Activated naive CD4-positive, alpha-beta T cell treated with anti-CD3 and anti-CD28 coated beads for 36 hours (primary cell): ENCODE measurements at regions of chr2 and their contacts with region 1.

Region 1: DNA sequence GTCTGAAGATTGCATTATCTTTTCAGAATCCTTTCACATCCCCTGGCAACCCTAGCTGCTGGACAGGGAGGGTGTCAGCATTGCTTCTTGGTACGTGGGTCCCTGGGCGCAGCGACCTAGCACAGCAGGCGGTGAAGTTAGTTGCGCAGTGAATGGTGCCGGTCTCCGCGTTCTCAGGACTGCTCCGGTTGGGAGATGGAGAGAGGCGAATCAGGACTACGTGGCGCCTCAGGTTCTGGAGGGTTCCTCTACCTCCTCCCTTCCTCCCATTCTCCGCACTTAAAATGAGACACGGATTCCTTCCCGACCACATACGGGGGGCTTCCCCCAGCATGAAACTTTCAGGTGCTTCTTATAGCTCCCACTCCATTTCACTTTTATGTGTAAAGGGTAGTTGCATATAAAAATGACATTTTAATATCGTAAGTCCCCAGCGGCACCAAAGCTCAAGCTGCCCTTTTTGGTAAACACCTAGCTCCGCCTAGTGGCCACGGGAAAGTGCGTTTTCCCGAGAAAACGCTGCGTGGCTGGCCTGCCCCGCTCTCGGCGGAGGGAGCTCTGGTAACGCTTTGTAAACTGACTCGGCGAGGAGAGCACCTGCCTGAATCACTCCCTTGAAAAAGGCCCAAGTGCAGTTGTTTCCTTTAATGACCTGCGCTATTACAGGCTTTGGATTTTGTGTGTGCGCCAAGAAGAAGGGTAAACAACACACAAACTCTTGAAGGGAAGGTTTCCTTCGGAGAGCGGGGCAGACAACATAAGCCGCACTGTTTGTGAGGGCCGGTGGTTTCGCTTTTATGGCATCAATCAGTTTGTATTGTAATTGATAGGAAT is 32.9 kb upstream of the INHBB start:
- DNase-seq: peak; percentile 92
- H3K4me3 Mint-ChIP-seq: peak overlapping the region; percentile 65
- H3K27ac Mint-ChIP-seq: no peak overlapping the region
- H3K4me1 Mint-ChIP-seq: peaks cover 32% of the 10 kb centered on the region
- H3K27me3 Mint-ChIP-seq: no peaks in the 10 kb centered on the region

Region 2: DNA sequence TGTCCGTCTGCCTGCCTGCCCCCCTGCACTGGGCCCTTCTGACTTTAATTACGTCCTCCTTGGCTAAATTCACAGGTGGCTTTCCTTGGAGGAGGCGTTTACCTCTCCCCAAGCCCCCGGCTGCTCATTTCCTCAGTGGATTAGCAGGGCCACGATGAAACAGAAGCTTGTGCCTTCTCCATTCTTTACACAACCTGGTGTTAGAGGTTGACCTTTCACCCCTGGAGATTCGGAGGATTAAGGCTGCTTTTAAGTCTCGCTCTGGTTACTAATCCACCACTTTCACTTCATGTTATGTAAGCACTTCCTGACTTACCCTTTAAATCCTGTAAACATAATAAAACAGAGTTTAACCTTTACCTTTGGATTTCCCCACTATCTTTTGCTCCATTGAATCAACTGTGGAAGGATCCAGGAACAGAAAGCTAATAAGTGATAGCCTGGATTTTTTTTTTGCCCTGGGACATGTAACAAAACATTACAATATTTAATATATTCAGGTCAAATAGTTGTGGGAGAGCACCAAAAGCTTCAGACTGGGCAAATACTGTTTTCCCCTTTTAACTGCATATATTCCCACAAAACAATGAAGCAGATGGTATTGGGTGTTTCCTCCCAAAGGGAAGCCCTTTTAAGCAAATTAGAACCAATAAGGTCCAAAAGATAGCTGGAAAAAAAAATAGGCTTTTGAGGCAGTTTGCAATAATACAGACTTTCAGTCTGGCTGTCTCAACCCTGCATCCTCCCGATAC is 1835.8 kb before region 1 on chr2:
- CTCF ChIA-PET with region 1: no interaction called
- intact Hi-C with region 1: no loop called
- DNase-seq: no peak
- H3K4me3 Mint-ChIP-seq: no peak overlapping the region
- H3K27ac Mint-ChIP-seq: no peak overlapping the region
- H3K4me1 Mint-ChIP-seq: no peaks in the 10 kb centered on the region
- H3K27me3 Mint-ChIP-seq: peaks cover 4% of the 10 kb centered on the region

Region 3: DNA sequence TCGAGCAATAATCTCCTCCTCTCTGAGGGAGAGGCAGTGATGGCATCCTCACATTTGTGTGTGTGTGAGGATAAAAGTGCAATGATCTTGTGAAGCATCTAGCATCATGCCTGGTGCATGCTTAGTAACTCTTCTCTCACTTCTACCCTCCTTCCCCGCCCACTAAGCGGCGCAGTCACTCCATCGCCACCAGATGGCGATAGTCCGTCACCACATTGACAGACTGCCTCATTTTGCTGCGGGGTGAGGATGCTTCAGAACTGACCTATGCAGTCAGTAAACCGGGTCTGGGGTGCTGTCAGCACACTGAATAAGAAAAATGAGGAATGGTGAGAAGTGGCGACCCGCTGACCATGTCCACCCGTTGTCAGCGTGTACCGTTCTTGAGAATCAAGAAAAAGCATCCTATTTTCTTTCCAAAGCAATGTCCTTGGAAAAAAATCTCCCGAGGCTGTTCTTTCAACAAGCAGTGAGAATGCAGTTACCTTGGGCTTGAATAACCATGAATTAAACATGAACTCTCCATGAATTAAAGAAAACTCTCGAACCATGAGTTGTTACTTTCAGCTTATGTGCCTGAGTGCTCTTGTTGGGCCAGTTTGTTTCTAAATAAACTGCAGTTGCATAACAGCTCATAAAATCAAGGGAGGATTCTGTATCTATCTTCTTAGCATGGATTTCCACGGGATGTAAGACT is 671.4 kb before region 1 on chr2:
- CTCF ChIA-PET with region 1: interaction called, 3 read pairs
- intact Hi-C with region 1: loop called (anchors 2 kb)
- DNase-seq: peak; percentile 84
- H3K4me3 Mint-ChIP-seq: no peak overlapping the region
- H3K27ac Mint-ChIP-seq: no peak overlapping the region
- H3K4me1 Mint-ChIP-seq: peaks cover 1% of the 10 kb centered on the region
- H3K27me3 Mint-ChIP-seq: no peaks in the 10 kb centered on the region

Region 4: GRCh38 chr2:119826370-119826961 is 486.6 kb before region 1 on chr2:
- CTCF ChIA-PET with region 1: interaction called, 4 read pairs
- intact Hi-C with region 1: loop called (anchors 5 kb)
- DNase-seq: peak; percentile 58
- H3K4me3 Mint-ChIP-seq: no peak overlapping the region
- H3K27ac Mint-ChIP-seq: no peak overlapping the region
- H3K4me1 Mint-ChIP-seq: peaks cover 43% of the 10 kb centered on the region
- H3K27me3 Mint-ChIP-seq: no peaks in the 10 kb centered on the region

Region 5: DNA sequence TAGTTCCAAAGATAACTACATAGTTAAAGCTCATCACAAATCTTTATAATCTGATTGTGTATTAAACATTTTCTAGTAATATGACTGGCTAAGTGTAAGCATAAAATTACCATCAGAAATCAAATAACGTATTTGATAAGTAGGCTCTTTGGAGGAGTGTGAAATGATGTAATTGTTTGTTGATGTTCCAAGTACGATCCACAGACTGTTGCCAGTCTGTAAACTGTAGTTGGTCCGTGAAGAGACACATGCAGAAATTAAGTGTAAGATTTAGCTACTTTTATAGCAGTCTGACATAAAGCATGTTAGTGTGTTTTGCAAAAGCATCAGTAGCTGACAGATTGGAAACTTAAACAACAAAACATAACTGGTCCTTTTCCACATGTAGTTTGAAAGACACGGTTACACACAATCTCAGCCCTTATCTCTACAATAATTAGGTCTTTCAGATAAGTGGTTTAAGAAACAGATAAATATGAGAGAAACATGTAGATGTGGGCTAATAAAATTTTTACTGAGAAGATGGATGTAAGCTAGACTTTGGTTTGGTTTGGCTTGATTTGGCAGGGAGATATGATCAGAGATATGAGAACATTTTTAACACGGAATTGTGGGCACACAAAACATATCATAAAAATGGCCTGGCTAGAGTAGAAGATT is 415.2 kb before region 1 on chr2:
- CTCF ChIA-PET with region 1: no interaction called
- intact Hi-C with region 1: no loop called
- DNase-seq: no peak
- H3K4me3 Mint-ChIP-seq: no peak overlapping the region
- H3K27ac Mint-ChIP-seq: no peak overlapping the region
- H3K4me1 Mint-ChIP-seq: no peaks in the 10 kb centered on the region
- H3K27me3 Mint-ChIP-seq: no peaks in the 10 kb centered on the region

Region 6: GRCh38 chr2:120206022-120206581 is 107.0 kb before region 1 on chr2:
- CTCF ChIA-PET with region 1: interaction called, 12 read pairs
- intact Hi-C with region 1: loop called (anchors 1 kb)
- DNase-seq: peak; percentile 62
- H3K4me3 Mint-ChIP-seq: no peak overlapping the region
- H3K27ac Mint-ChIP-seq: no peak overlapping the region
- H3K4me1 Mint-ChIP-seq: peaks cover 3% of the 10 kb centered on the region
- H3K27me3 Mint-ChIP-seq: no peaks in the 10 kb centered on the region

Region 7: DNA sequence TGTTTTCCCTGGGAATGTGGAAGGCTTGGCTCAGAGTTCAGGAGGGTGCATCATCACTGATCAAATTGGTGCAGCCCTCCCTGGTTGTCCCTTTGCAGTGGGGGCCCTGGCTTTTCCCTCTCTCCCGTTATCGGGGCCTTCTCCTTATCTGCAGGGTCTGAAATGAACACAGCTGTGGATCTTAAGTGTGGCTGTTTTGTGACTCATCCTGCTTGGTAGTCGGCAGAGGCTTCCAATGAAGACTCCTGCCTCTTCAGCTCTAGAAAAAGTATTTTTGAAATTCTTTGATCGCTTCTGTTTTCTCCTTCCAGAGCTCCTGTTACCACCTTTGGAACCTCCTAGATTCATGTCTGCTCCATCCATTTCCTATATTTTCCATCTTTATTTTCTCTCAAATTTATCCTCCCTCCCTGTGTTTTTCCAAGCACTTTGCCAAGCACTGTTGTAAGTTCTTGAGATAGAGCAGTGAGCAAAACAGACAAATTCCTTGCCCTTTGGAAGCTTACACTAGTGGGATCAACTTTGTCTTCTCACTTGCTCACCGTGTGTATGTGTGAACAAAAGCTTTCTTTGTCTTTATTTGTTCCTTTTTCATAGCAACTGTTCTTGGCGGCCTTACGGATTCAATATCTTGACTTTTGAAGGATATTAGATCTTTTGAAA is 14.8 kb before region 1 on chr2:
- CTCF ChIA-PET with region 1: interaction called, 22 read pairs
- intact Hi-C with region 1: no loop called
- DNase-seq: no peak
- H3K4me3 Mint-ChIP-seq: no peak overlapping the region
- H3K27ac Mint-ChIP-seq: no peak overlapping the region
- H3K4me1 Mint-ChIP-seq: peaks cover 3% of the 10 kb centered on the region
- H3K27me3 Mint-ChIP-seq: no peaks in the 10 kb centered on the region

Region 8: DNA sequence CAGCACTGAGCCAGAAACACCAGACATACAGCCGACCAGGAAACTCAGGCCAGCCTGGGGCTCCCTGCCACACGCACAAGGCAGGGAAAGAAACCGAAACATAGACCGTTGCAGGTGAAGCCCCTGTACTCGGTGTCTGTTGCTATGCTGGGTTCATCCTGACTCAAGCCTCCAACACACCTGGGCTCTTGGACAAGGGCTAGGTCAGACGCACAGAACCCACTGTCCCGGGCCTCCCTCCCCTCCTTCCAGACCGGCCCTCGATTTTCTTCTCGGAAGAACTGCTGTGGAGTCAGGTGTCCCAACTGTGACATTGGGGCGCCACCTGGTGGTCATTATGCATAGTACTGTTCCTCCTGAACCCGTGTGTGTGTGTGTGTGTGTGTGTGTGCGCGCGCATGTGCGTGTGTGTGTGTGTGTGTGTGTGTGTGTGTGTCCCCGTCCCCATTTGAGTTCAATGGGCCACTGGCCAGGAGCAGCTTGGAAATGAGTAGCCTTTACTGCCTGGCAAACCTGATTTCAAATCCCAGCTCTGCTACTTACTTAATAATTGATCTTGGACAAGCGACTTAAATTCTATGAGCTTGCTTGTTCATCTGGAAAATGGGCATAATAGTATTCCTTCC is 367.2 kb after region 1 on chr2:
- CTCF ChIA-PET with region 1: interaction called, 7 read pairs
- intact Hi-C with region 1: loop called (anchors 1 kb)
- DNase-seq: peak; percentile 87
- H3K4me3 Mint-ChIP-seq: no peak overlapping the region
- H3K27ac Mint-ChIP-seq: no peak overlapping the region
- H3K4me1 Mint-ChIP-seq: peaks cover 2% of the 10 kb centered on the region
- H3K27me3 Mint-ChIP-seq: peaks cover 15% of the 10 kb centered on the region